ENCODE measurements at regions of chr4 and their contacts with region 1.

Region 1: DNA sequence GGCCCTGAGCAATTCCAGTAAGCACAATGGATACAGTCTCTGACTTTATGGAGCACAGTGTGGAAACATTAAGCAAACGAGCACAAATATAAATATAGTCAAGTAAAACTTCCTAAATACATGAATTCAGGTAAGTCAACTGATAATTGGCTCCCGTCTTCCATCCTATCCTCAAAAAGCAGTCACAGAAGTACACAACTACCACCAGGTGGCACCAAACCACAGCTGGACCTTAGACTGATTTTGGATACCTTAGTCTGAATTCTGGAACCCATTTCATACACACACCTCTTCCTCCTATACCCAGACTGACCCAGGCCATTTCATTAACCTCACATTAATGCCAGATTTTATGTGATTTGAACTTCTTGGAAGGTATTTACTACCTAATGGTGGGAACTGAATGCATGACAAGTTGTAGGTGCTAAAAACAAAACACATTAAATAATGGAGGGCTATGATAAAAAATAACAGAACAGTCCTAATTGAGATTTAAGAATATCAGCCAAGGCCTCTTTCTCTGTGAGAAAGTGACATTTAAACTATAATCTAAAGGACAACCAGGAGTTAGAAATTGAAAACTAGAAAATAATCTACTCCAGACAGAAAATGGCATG is 77.5 kb downstream of the ELF2 start:
- DNase-seq: peak; percentile 86
- ATAC-seq: peak; percentile 79; the same call in 1 of the 2 replicates
- H3K4me3 ChIP-seq: no peak overlapping the region
- H3K27ac ChIP-seq: no peak overlapping the region
- H3K4me1 ChIP-seq: no peaks in the 10 kb centered on the region
- H3K27me3 ChIP-seq: no peaks in the 10 kb centered on the region
- CTCF ChIP-seq: peak; percentile 85
- POLR2A ChIP-seq: 0 out of 2 replicates have a peak, but pooled peaks have one; percentile 23
- RAD21 ChIP-seq: peak; percentile 93

Region 2: GRCh38 chr4:138507522-138507921 is 592.0 kb before region 1 on chr4:
- CTCF ChIA-PET with region 1: no interaction called
- POLR2A ChIA-PET with region 1: no interaction called
- dilution Hi-C with region 1: no loop called
- in situ Hi-C with region 1: no loop called
- intact Hi-C with region 1: no loop called
- DNase-seq: peak; percentile 69
- ATAC-seq: peak; percentile 92
- H3K4me3 ChIP-seq: no peak overlapping the region
- H3K27ac ChIP-seq: 0 out of 2 replicates have a peak overlapping the region, but pooled peaks have one; percentile 23
- H3K4me1 ChIP-seq: peaks cover 7% of the 10 kb centered on the region; the same call in 1 of the 2 replicates
- H3K27me3 ChIP-seq: no peaks in the 10 kb centered on the region
- CTCF ChIP-seq: no peak
- POLR2A ChIP-seq: no peak
- RAD21 ChIP-seq: no peak

Region 3: DNA sequence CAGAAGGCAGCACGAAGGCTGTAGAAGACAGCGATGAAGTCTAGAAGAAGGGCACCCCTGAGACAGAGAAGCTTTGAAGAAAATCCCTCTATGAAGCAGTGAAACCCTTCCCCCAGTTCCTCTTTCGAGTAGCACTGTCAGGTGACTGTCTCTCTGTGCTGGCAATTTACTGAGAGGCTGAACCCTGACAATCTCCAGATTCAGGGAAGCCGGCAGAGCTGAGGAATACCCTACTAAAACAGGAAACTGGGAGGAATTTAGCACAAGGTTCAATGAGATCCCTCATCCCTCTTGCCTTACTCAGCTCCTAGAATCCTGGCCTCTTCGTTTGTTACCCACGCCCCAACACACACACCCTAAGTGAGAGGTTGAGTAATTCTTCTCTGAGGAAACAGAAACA is 323.6 kb before region 1 on chr4:
- CTCF ChIA-PET with region 1: no interaction called
- POLR2A ChIA-PET with region 1: no interaction called
- dilution Hi-C with region 1: no loop called
- in situ Hi-C with region 1: no loop called
- intact Hi-C with region 1: no loop called
- DNase-seq: no peak
- ATAC-seq: peak; percentile 62
- H3K4me3 ChIP-seq: no peak overlapping the region
- H3K27ac ChIP-seq: no peak overlapping the region
- H3K4me1 ChIP-seq: peaks cover 1% of the 10 kb centered on the region; the same call in 1 of the 2 replicates
- H3K27me3 ChIP-seq: no peaks in the 10 kb centered on the region; the same call in 1 of the 2 replicates
- CTCF ChIP-seq: no peak
- POLR2A ChIP-seq: no peak
- RAD21 ChIP-seq: no peak

Region 4: GRCh38 chr4:139229534-139230039 is 130.1 kb after region 1 on chr4:
- CTCF ChIA-PET with region 1: no interaction called
- POLR2A ChIA-PET with region 1: no interaction called
- dilution Hi-C with region 1: no loop called
- in situ Hi-C with region 1: no loop called
- intact Hi-C with region 1: loop called (anchors 1 kb)
- DNase-seq: peak; percentile 68
- ATAC-seq: peak; percentile 89
- H3K4me3 ChIP-seq: no peak overlapping the region
- H3K27ac ChIP-seq: no peak overlapping the region
- H3K4me1 ChIP-seq: no peaks in the 10 kb centered on the region
- H3K27me3 ChIP-seq: no peaks in the 10 kb centered on the region
- CTCF ChIP-seq: peak; percentile 76
- POLR2A ChIP-seq: no peak
- RAD21 ChIP-seq: peak; percentile 69

Region 5: GRCh38 chr4:139279760-139280620 is 180.5 kb after region 1 on chr4 and contains the start of gene MGARP:
- CTCF ChIA-PET with region 1: no interaction called
- POLR2A ChIA-PET with region 1: no interaction called
- dilution Hi-C with region 1: no loop called
- in situ Hi-C with region 1: no loop called
- intact Hi-C with region 1: loop called (anchors 5 kb)
- DNase-seq: peak; percentile 30
- ATAC-seq: peak; percentile 86
- H3K4me3 ChIP-seq: peak within 1 kb of the TSS; percentile 60
- H3K27ac ChIP-seq: peak within 1 kb of the TSS; percentile 33
- H3K4me1 ChIP-seq: peaks cover 3% of the 10 kb centered on the region
- H3K27me3 ChIP-seq: no peaks in the 10 kb centered on the region
- CTCF ChIP-seq: no peak
- POLR2A ChIP-seq: no peak
- RAD21 ChIP-seq: no peak
- total RNA-seq, gene MGARP: 35.0 and 44.4 TPM in 2 replicates

Measured in IMR-90 (cell line).